ENCODE measurements at regions of chr1 and their contacts with region 1.

Region 1: GRCh38 chr1:164625001-164625617 is 66.1 kb downstream of the PBX1 start:
- DNase-seq: peak; percentile 45 to 55 (median 51)
- H3K4me3 ChIP-seq: peak overlapping the region in 5 of 7 experiments; percentile 40 to 72 (median 53)
- H3K27ac ChIP-seq: peak overlapping the region in 1 of 2 experiments; percentile 40
- H3K4me1 ChIP-seq: peaks cover 0 to 20% (median 0%) of the 10 kb centered on the region in 4 experiments
- H3K27me3 ChIP-seq: no peaks in the 10 kb centered on the region

Region 2: DNA sequence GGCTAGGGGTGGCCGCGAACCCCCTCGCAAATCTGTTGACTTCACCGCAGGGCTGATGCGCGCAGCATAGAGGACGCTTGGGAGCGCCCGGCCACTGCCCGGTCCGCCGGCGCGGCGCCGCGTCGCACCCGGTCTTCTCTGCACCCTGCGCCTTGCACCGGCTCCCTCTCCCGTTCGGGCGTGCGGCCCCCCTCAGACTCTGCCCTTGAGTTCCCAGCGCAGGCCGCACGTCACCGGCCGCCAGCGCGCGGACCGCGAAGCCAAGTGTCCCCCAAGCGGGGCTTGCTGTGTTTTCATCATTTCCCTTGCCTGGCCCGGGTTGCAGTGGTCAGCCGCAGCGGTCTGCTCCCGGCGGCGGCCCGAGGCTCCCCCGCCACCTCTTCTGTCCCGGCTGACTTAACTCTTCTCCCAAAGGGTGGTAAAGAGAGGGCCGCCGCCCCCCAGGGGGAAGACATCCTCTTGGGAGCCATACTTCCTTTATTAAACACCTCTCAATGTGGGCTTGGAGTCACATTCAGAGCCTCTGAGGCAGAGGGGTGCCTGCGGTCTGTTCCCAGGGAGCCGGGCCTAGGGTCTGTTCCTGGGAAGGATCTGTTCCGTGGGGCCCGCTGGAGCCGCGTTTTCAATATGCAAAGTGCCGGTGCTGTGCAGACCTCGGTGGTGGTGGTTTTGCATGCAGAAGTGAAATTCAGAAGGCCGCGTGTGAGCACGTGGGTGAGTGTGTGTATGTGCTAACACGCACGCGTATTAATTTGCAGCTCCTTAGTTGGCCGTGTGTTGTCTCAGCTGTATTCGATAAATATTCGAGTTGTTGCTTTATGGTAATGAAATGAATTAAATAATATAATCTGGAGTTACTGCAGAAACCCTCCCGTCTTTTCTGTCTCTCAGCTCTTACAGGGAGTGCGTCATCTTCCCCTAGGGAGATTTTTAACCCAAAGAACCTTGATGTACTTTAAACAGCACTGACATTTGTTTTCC is 48.5 kb before region 1 on chr1:
- CTCF ChIA-PET with region 1: no interaction called
- POLR2A ChIA-PET with region 1: no interaction called
- DNase-seq: no peak
- H3K4me3 ChIP-seq: no peak overlapping the region
- H3K27ac ChIP-seq: no peak overlapping the region
- H3K4me1 ChIP-seq: peaks cover 0 to 9% (median 0%) of the 10 kb centered on the region in 4 experiments
- H3K27me3 ChIP-seq: no peaks in the 10 kb centered on the region

Region 3: GRCh38 chr1:164601399-164602374 is 23.4 kb before region 1 on chr1:
- CTCF ChIA-PET with region 1: no interaction called
- POLR2A ChIA-PET with region 1: no interaction called
- DNase-seq: no peak
- H3K4me3 ChIP-seq: peak overlapping the region in 1 of 7 experiments; percentile 64
- H3K27ac ChIP-seq: no peak overlapping the region
- H3K4me1 ChIP-seq: peaks cover 0 to 25% (median 9%) of the 10 kb centered on the region in 4 experiments
- H3K27me3 ChIP-seq: no peaks in the 10 kb centered on the region

Region 4: GRCh38 chr1:164641353-164641730 is 16.2 kb after region 1 on chr1:
- CTCF ChIA-PET with region 1: interaction called, 16 read pairs
- POLR2A ChIA-PET with region 1: no interaction called
- DNase-seq: no peak
- H3K4me3 ChIP-seq: no peak overlapping the region
- H3K27ac ChIP-seq: no peak overlapping the region
- H3K4me1 ChIP-seq: no peaks in the 10 kb centered on the region
- H3K27me3 ChIP-seq: no peaks in the 10 kb centered on the region

Region 5: GRCh38 chr1:164891612-164892011 is 266.5 kb after region 1 on chr1:
- CTCF ChIA-PET with region 1: no interaction called
- POLR2A ChIA-PET with region 1: no interaction called
- DNase-seq: peak; percentile 3 to 11 (median 4)
- H3K4me3 ChIP-seq: no peak overlapping the region
- H3K27ac ChIP-seq: no peak overlapping the region
- H3K4me1 ChIP-seq: no peaks in the 10 kb centered on the region
- H3K27me3 ChIP-seq: no peaks in the 10 kb centered on the region